Activated CD4-positive, alpha-beta memory T cell treated with anti-CD3 and anti-CD28 coated beads for 36 hours (primary cell): ENCODE measurements at regions of chr3 and their contacts with region 1.

Region 1: GRCh38 chr3:28328188-28329151 is 20.1 kb upstream of the ZCWPW2 start:
- DNase-seq: no peak
- H3K4me3 Mint-ChIP-seq: no peak overlapping the region
- H3K27ac Mint-ChIP-seq: no peak overlapping the region
- H3K4me1 Mint-ChIP-seq: peaks cover 18% of the 10 kb centered on the region
- H3K27me3 Mint-ChIP-seq: no peaks in the 10 kb centered on the region

Region 2: GRCh38 chr3:27696906-27697305 is 631.6 kb before region 1 on chr3:
- CTCF ChIA-PET with region 1: no interaction called
- POLR2A ChIA-PET with region 1: no interaction called
- intact Hi-C with region 1: no loop called
- DNase-seq: no peak
- H3K4me3 Mint-ChIP-seq: no peak overlapping the region
- H3K27ac Mint-ChIP-seq: no peak overlapping the region
- H3K4me1 Mint-ChIP-seq: no peaks in the 10 kb centered on the region
- H3K27me3 Mint-ChIP-seq: no peaks in the 10 kb centered on the region

Region 3: GRCh38 chr3:27861046-27862036 is 467.1 kb before region 1 on chr3:
- CTCF ChIA-PET with region 1: no interaction called
- POLR2A ChIA-PET with region 1: no interaction called
- intact Hi-C with region 1: loop called (anchors 5 kb)
- DNase-seq: peak; percentile 18
- H3K4me3 Mint-ChIP-seq: no peak overlapping the region
- H3K27ac Mint-ChIP-seq: peak overlapping the region; percentile 88
- H3K4me1 Mint-ChIP-seq: peaks cover 32% of the 10 kb centered on the region
- H3K27me3 Mint-ChIP-seq: no peaks in the 10 kb centered on the region

Region 4: DNA sequence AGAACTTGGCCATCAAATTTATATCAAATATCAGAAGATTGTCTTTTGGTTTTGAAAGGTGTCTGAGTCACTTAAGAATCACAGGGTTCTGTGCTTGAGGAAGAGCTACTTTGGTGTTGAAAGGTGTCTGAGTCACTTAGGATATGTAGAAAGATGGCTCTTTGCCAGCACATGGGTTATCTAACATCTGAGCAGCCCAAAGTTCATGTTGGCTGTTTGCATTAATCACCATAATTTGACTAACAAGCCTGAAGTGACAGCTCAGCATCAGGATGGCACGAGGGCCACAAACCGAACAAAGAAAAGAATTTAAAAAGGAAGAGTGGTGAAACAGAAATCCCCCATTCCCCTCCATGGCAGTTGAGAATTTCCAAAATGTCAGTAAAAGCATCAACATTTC is 277.6 kb before region 1 on chr3:
- CTCF ChIA-PET with region 1: no interaction called
- POLR2A ChIA-PET with region 1: interaction called, 4 read pairs
- intact Hi-C with region 1: loop called (anchors 1 kb)
- DNase-seq: peak; percentile 52
- H3K4me3 Mint-ChIP-seq: no peak overlapping the region
- H3K27ac Mint-ChIP-seq: peak overlapping the region; percentile 13
- H3K4me1 Mint-ChIP-seq: peaks cover 26% of the 10 kb centered on the region
- H3K27me3 Mint-ChIP-seq: peaks cover 10% of the 10 kb centered on the region

Region 5: GRCh38 chr3:28286595-28286994 is 41.9 kb before region 1 on chr3:
- CTCF ChIA-PET with region 1: interaction called, 3 read pairs
- POLR2A ChIA-PET with region 1: no interaction called
- intact Hi-C with region 1: loop called (anchors 1 kb)
- DNase-seq: no peak
- H3K4me3 Mint-ChIP-seq: no peak overlapping the region
- H3K27ac Mint-ChIP-seq: no peak overlapping the region
- H3K4me1 Mint-ChIP-seq: peaks cover 13% of the 10 kb centered on the region
- H3K27me3 Mint-ChIP-seq: no peaks in the 10 kb centered on the region

Region 6: DNA sequence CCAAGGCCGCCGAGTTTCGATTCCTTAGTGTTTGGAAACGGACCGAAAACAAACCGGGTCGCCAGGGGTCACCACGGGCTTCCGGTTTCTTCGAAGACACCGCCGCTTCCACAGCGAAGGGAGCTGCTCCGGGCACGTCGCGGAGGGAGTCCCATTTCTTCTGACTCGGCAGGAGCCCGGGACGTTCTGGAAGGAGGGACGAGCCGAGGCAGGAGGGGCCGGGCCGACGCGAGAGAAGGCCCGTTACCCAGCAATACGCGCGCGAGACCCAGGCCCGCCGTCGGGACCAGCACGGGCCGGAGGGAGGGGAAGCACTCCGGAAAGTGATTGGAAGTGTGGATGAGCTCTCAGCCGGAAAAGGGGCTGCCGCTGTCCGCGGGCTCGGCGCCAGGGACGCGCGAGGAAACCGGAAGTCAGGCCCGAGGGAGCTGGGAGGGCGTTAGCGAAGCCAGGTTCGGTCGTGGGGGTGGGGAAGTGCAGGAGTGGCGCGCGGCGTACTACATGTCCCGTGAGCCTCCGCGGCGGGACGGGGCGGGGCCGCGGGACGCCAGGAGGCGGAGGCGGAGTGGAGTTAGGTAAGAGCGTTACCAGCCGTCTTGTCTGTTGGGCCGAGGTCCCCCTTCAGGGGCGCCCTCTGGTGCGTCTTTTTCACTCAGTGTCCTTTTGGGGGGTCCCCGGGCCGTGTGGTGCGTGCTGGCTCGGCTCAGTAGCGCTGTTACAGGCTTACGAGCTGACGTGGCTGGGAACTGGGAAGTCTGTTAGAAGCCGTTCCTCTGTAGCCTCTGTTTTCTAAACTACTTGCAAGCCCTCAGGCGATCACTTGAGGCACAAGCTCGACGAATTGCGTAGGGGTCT is 20.4 kb after region 1 on chr3 and contains the starts of genes AZI2 and ZCWPW2:
- CTCF ChIA-PET with region 1: interaction called, 23 read pairs
- POLR2A ChIA-PET with region 1: interaction called, 12 read pairs
- intact Hi-C with region 1: loop called (anchors 1 kb)
- DNase-seq: peak; percentile 94
- H3K4me3 Mint-ChIP-seq: peak within 1 kb of the TSS; percentile 95
- H3K27ac Mint-ChIP-seq: peak within 1 kb of the TSS; percentile 88
- H3K4me1 Mint-ChIP-seq: peaks cover 40% of the 10 kb centered on the region
- H3K27me3 Mint-ChIP-seq: no peaks in the 10 kb centered on the region
- total RNA-seq, gene AZI2: 35.5 to 38.9 TPM
- total RNA-seq, gene ZCWPW2: 0.39 to 0.43 TPM

Region 7: DNA sequence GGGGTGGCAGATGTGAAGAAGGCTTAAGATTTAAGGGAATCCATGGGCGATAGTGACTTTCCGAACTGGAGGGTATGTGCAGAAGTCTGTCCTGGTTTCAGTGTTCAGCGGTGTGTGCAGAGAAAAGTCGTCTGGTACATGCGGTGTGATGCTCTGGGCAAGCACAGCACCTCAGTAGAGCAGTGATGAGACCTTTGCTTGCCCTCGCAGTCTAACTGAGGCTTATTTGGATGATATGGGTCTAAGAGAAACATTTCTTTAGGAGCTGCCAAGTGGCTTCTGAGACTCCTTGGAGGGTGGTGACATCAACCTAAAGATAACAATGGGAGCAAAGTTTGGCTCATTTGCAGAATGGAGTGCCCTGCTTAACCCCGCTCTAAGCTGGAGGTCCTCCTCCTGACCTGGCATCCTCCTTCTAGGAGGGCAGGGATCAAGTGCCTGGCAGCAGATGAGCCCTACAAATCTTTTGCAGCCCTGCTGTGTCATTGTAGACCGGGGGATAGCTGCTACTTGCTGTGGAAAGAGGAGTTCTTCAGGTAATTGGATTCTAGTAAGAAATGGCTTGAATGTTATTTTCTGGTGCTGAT is 248.2 kb after region 1 on chr3:
- CTCF ChIA-PET with region 1: no interaction called
- POLR2A ChIA-PET with region 1: no interaction called
- intact Hi-C with region 1: no loop called
- DNase-seq: no peak
- H3K4me3 Mint-ChIP-seq: no peak overlapping the region
- H3K27ac Mint-ChIP-seq: no peak overlapping the region
- H3K4me1 Mint-ChIP-seq: no peaks in the 10 kb centered on the region
- H3K27me3 Mint-ChIP-seq: peaks cover 50% of the 10 kb centered on the region

Region 8: DNA sequence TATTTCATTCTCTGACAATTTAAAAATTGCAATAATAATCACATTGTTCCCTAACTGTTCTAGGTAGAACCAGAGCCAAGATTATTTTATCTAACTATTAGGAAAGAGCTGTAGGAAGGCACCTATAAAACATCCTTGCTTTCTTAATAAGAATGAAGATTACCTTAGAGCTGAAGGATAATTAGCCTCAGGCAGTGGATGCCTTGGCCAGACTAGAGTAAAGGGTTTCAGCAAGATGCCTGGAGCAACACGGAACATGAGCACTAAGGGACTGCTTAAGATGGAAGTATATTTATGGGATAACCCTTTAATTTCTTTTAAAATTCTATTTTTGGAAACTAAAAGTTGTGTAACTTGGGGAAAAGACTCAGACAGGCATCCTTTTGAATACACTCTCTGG is 495.8 kb after region 1 on chr3:
- CTCF ChIA-PET with region 1: no interaction called
- POLR2A ChIA-PET with region 1: no interaction called
- intact Hi-C with region 1: no loop called
- DNase-seq: no peak
- H3K4me3 Mint-ChIP-seq: no peak overlapping the region
- H3K27ac Mint-ChIP-seq: no peak overlapping the region
- H3K4me1 Mint-ChIP-seq: no peaks in the 10 kb centered on the region
- H3K27me3 Mint-ChIP-seq: peaks cover 2% of the 10 kb centered on the region